PC-9 (cell line): ENCODE measurements at regions of chr18 and their contacts with region 1.

Region 1: GRCh38 chr18:21074336-21075323 is 37.0 kb downstream of the ROCK1 start:
- DNase-seq: peak; percentile 17 to 80
- H3K4me3 ChIP-seq: peak overlapping the region; percentile 11; the same call in 1 of the 2 replicates
- H3K27ac ChIP-seq: peak overlapping the region; percentile 78
- H3K4me1 ChIP-seq: peaks cover 42% of the 10 kb centered on the region
- H3K27me3 ChIP-seq: no peaks in the 10 kb centered on the region
- CTCF ChIP-seq: no peak

Region 2: GRCh38 chr18:21111341-21112139 is 36.9 kb after region 1 on chr18 and contains the start of gene ROCK1:
- CTCF ChIA-PET with region 1: no interaction called
- POLR2A ChIA-PET with region 1: no interaction called
- intact Hi-C with region 1: loop called (anchors 5 kb)
- DNase-seq: peak; percentile 73 to 90
- H3K4me3 ChIP-seq: peak within 1 kb of the TSS; percentile 90
- H3K27ac ChIP-seq: peak within 1 kb of the TSS; percentile 47
- H3K4me1 ChIP-seq: peaks cover 27% of the 10 kb centered on the region
- H3K27me3 ChIP-seq: no peaks in the 10 kb centered on the region
- CTCF ChIP-seq: no peak
- total RNA-seq, gene ROCK1: 17.7 and 26.8 TPM in 2 replicates